Activated CD4-positive, alpha-beta memory T cell treated with anti-CD3 and anti-CD28 coated beads, Interleukin-2, amount 10 ng/mL, durations not matched to agents 7 days and 5 days (primary cell): ENCODE measurements at regions of chr20 and their contacts with region 1.

Region 1: DNA sequence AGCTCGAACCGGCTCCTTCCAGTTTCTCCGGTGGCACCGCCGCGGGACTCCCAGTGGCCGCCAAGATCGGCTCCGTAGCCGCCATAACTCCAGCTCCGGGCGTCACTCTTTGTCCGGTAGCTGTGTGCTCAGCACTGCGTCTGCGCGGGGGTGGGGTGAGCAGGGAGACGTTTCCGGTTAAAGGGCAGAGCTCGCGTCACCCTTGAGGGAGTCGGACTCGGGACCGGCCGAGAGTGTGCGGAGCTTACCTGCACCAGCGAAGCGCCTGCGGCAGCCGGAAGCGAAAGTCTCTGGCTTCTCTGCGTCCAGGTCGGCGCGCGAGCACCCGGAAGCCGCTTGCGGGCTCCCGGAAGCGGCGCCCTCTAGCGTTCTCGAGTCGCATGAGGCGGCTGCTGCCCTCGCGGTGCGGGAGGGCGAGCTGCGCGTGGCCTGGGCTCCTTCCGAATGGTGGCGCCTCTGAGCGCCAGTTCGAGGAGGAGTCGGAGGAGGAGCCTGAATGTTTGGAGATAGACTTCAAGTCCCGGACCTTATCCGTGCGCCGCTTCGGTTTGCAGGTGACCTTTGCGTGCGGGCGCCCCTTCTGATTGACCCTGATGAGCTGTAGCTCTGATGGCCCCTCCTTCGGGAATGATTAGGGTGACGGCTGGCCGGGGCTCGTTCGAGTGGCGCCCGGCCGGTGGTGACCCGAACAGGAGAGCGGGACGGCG is at the start of gene SCAND1:
- DNase-seq: peak; percentile 97
- H3K4me3 Mint-ChIP-seq: peak within 1 kb of the TSS; percentile 99
- H3K27ac Mint-ChIP-seq: peak within 1 kb of the TSS; percentile 100
- H3K4me1 Mint-ChIP-seq: peaks cover 25% of the 10 kb centered on the region
- H3K27me3 Mint-ChIP-seq: no peaks in the 10 kb centered on the region
- total RNA-seq, gene SCAND1: 65.5 to 70.0 TPM

Region 2: GRCh38 chr20:35699127-35699975 is 255.0 kb before region 1 on chr20 and contains the starts of genes NFS1 and ROMO1:
- CTCF ChIA-PET with region 1: interaction called, 3 read pairs
- POLR2A ChIA-PET with region 1: interaction called, 10 read pairs
- DNase-seq: peak; percentile 87
- H3K4me3 Mint-ChIP-seq: peak within 1 kb of the TSS; percentile 91
- H3K27ac Mint-ChIP-seq: peak within 1 kb of the TSS; percentile 77
- H3K4me1 Mint-ChIP-seq: peaks cover 56% of the 10 kb centered on the region
- H3K27me3 Mint-ChIP-seq: no peaks in the 10 kb centered on the region
- total RNA-seq, gene NFS1: 28.3 to 30.8 TPM
- total RNA-seq, gene ROMO1: 98.4 to 114 TPM

Region 3: DNA sequence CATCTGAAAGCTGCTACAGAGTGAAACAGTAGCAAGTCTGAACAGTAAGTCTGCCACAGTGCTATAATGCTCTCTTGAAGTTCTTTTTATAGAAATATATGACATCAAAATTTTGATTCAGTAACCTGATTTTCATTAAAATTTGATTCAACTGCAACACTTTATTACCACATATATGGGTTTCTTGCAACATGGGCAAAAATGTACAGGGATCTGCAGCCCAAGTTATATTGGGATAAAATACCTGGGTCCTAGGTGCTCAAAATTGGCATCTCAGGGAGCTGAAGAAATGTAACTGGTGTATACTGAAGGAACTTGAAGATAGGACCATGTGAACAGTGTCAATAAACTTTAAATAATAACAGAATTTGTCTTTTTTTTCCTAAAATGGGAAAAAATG is 244.3 kb before region 1 on chr20:
- CTCF ChIA-PET with region 1: no interaction called
- POLR2A ChIA-PET with region 1: no interaction called
- DNase-seq: no peak
- H3K4me3 Mint-ChIP-seq: no peak overlapping the region
- H3K27ac Mint-ChIP-seq: no peak overlapping the region
- H3K4me1 Mint-ChIP-seq: peaks cover 49% of the 10 kb centered on the region
- H3K27me3 Mint-ChIP-seq: no peaks in the 10 kb centered on the region

Region 4: GRCh38 chr20:35771689-35772562 is 182.4 kb before region 1 on chr20 and contains the start of gene PHF20:
- CTCF ChIA-PET with region 1: interaction called, 22 read pairs
- POLR2A ChIA-PET with region 1: interaction called, 39 read pairs
- DNase-seq: peak; percentile 99
- H3K4me3 Mint-ChIP-seq: peak within 1 kb of the TSS; percentile 77
- H3K27ac Mint-ChIP-seq: peak within 1 kb of the TSS; percentile 79
- H3K4me1 Mint-ChIP-seq: peaks cover 65% of the 10 kb centered on the region
- H3K27me3 Mint-ChIP-seq: no peaks in the 10 kb centered on the region
- total RNA-seq, gene PHF20: 42.7 to 48.3 TPM

Region 5: DNA sequence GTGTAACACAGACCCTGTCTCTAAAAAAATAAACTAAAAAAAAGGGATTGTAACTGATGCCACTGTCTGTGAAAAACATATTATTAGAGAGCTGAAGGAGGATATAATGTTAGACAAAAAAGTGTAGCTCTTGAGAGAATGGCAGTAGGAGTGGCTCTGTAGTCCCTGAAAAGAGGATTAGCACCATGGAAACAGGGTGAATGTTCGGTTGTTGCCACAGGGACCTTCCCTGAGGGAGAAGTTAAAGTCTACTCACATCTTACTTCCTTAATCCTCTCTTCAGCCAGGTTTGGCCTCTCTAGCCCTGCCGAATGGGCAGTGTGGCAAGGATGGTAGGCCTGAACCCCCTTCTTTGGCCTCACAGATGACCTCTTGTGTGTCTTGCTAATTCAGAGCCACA is 12.1 kb before region 1 on chr20:
- CTCF ChIA-PET with region 1: interaction called, 27 read pairs
- POLR2A ChIA-PET with region 1: interaction called, 36 read pairs
- DNase-seq: no peak
- H3K4me3 Mint-ChIP-seq: no peak overlapping the region
- H3K27ac Mint-ChIP-seq: no peak overlapping the region
- H3K4me1 Mint-ChIP-seq: no peaks in the 10 kb centered on the region
- H3K27me3 Mint-ChIP-seq: no peaks in the 10 kb centered on the region